ENCODE measurements at regions of chr1 and their contacts with region 1.

Region 1: GRCh38 chr1:95116580-95117206 is 462 bp upstream of the TLCD4 start:
- DNase-seq: peak; percentile 52 to 78
- ATAC-seq: peak; percentile 83
- H3K4me3 ChIP-seq: peak overlapping the region; percentile 88 to 99
- H3K27ac ChIP-seq: peak overlapping the region in 1 of 2 donors; percentile 28
- H3K4me1 ChIP-seq: peaks cover 2 to 3% of the 10 kb centered on the region in 2 donors
- H3K27me3 ChIP-seq: no peaks in the 10 kb centered on the region

Region 2: DNA sequence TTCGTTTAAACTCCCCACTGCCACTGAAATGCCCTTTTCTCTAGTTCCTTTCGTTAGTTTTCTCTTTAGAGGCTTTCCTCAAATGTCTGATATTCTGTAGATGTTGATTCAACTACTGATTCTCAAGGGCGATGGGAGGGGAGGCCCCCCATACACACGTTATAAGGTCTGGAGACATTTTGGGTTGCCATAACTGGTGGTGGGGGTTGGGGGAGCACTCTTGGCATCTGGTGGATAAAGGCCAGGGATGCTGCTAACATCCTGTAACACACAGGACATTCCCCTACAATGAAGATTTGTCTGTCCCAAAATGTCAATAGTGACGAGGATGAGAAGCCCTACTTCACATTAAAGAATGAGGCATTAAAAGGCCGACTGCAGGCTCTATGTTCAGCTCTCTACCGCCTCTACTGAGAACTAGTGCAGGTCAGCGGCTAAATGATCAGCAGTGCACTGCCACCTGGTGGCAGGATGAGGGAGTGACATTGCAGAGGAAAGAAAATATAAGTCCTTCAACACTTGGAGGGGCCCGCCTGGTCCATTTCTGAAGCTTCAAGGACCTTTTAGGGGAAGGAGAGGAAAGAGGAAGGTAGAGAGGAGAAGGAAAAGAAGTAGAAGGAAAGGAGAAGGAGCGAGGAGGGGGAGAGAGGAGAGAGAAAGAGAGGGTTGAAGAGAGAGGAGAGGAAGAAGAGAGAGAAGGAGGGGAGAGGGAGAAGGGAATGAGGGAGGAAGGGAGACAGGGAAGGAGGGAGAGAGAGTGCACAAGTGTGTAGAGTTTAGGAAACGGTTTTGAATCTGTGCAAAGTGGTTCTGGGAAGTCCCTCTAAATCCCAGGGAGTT is 73.3 kb before region 1 on chr1:
- intact Hi-C with region 1: no loop called
- DNase-seq: peak; percentile 84 to 91
- ATAC-seq: peak; percentile 93
- H3K4me3 ChIP-seq: no peak overlapping the region
- H3K27ac ChIP-seq: peak overlapping the region in 1 of 2 donors; percentile 17
- H3K4me1 ChIP-seq: peaks cover 0 to 1% of the 10 kb centered on the region in 2 donors
- H3K27me3 ChIP-seq: no peaks in the 10 kb centered on the region

Region 3: GRCh38 chr1:95072532-95073419 is 43.9 kb before region 1 on chr1 and contains the start of gene ALG14:
- intact Hi-C with region 1: loop called (anchors 5 kb)
- DNase-seq: peak; percentile 97
- ATAC-seq: peak; percentile 98
- H3K4me3 ChIP-seq: peak within 1 kb of the TSS; percentile 58 to 97
- H3K27ac ChIP-seq: peak within 1 kb of the TSS in 1 of 2 donors; percentile 96
- H3K4me1 ChIP-seq: no peaks in the 10 kb centered on the region
- H3K27me3 ChIP-seq: no peaks in the 10 kb centered on the region
- total RNA-seq, gene ALG14: 2.8 to 3.2 TPM

Region 4: GRCh38 chr1:95084317-95085176 is 32.1 kb before region 1 on chr1:
- intact Hi-C with region 1: loop called (anchors 1 to 5 kb)
- DNase-seq: no peak
- ATAC-seq: no peak
- H3K4me3 ChIP-seq: no peak overlapping the region
- H3K27ac ChIP-seq: peak overlapping the region in 1 of 2 donors; percentile 25
- H3K4me1 ChIP-seq: peaks cover 0 to 8% of the 10 kb centered on the region in 2 donors
- H3K27me3 ChIP-seq: no peaks in the 10 kb centered on the region

Region 5: DNA sequence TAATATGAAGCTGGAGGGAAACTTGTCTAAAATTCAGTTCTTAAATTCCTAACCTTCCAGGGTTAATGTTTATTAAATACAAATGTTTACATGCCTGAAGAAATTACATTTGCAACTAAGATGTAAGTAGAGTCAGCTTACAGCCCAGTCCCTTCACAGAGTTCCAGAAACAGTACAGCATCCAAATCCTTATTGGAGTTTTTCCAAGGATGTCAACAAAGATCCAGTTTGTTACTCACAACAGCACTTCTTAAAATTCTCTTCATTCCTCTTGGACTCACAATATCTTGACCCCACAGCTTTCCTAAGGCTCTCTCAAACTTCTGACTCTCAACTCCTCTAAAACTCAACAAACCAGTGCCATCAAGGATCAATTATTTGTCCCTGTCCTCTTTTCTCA is 67.3 kb after region 1 on chr1:
- intact Hi-C with region 1: no loop called
- DNase-seq: no peak
- ATAC-seq: no peak
- H3K4me3 ChIP-seq: no peak overlapping the region
- H3K27ac ChIP-seq: no peak overlapping the region
- H3K4me1 ChIP-seq: peaks cover 0 to 2% of the 10 kb centered on the region in 2 donors
- H3K27me3 ChIP-seq: no peaks in the 10 kb centered on the region

Region 6: GRCh38 chr1:95216292-95216990 is 99.7 kb after region 1 on chr1:
- intact Hi-C with region 1: no loop called
- DNase-seq: no peak
- ATAC-seq: no peak
- H3K4me3 ChIP-seq: no peak overlapping the region
- H3K27ac ChIP-seq: no peak overlapping the region
- H3K4me1 ChIP-seq: no peaks in the 10 kb centered on the region
- H3K27me3 ChIP-seq: no peaks in the 10 kb centered on the region

Region 7: GRCh38 chr1:95233737-95234500 is 117.2 kb after region 1 on chr1 and contains the start of gene RWDD3:
- intact Hi-C with region 1: loop called (anchors 2 to 10 kb)
- DNase-seq: peak; percentile 96 to 98
- ATAC-seq: peak; percentile 99
- H3K4me3 ChIP-seq: peak within 1 kb of the TSS; percentile 79 to 91
- H3K27ac ChIP-seq: peak within 1 kb of the TSS; percentile 50 to 85
- H3K4me1 ChIP-seq: peaks cover 3 to 4% of the 10 kb centered on the region in 2 donors
- H3K27me3 ChIP-seq: no peaks in the 10 kb centered on the region
- total RNA-seq, gene RWDD3: 16.7 to 18.3 TPM

Region 8: GRCh38 chr1:95723346-95723745 is 606.7 kb after region 1 on chr1:
- intact Hi-C with region 1: no loop called
- DNase-seq: no peak
- ATAC-seq: no peak
- H3K4me3 ChIP-seq: no peak overlapping the region
- H3K27ac ChIP-seq: no peak overlapping the region
- H3K4me1 ChIP-seq: no peaks in the 10 kb centered on the region
- H3K27me3 ChIP-seq: no peaks in the 10 kb centered on the region